ENCODE measurements at regions of chr12 and their contacts with region 1.

Region 1: GRCh38 chr12:76083904-76084862 is at the start of gene NAP1L1:
- DNase-seq: peak; percentile 99
- H3K4me3 ChIP-seq: peak within 1 kb of the TSS; percentile 95
- H3K27ac ChIP-seq: peak within 1 kb of the TSS; percentile 98
- H3K4me1 ChIP-seq: peaks cover 23% of the 10 kb centered on the region
- H3K27me3 ChIP-seq: no peaks in the 10 kb centered on the region
- CTCF ChIP-seq: no peak
- total RNA-seq, gene NAP1L1: 801 and 837 TPM in 2 replicates

Region 2: GRCh38 chr12:76559400-76560085 is 475.4 kb after region 1 on chr12 and contains the start of gene OSBPL8:
- CTCF ChIA-PET with region 1: no interaction called
- POLR2A ChIA-PET with region 1: no interaction called
- intact Hi-C with region 1: loop called (anchors 10 kb)
- DNase-seq: peak; percentile 96
- H3K4me3 ChIP-seq: peak within 1 kb of the TSS; percentile 96
- H3K27ac ChIP-seq: peak within 1 kb of the TSS; percentile 92
- H3K4me1 ChIP-seq: peaks cover 25% of the 10 kb centered on the region
- H3K27me3 ChIP-seq: no peaks in the 10 kb centered on the region
- CTCF ChIP-seq: 0 out of 2 replicates have a peak, but pooled peaks have one; percentile 23
- total RNA-seq, gene OSBPL8: 79.5 and 86.1 TPM in 2 replicates

Region 3: GRCh38 chr12:76920172-76921014 is 836.2 kb after region 1 on chr12:
- CTCF ChIA-PET with region 1: no interaction called
- POLR2A ChIA-PET with region 1: no interaction called
- intact Hi-C with region 1: no loop called
- DNase-seq: no peak
- H3K4me3 ChIP-seq: no peak overlapping the region
- H3K27ac ChIP-seq: no peak overlapping the region
- H3K4me1 ChIP-seq: no peaks in the 10 kb centered on the region
- H3K27me3 ChIP-seq: no peaks in the 10 kb centered on the region
- CTCF ChIP-seq: no peak

Measured in A673 (cell line).